Activated CD4-positive, alpha-beta memory T cell treated with anti-CD3 and anti-CD28 coated beads for 36 hours (primary cell): ENCODE measurements at regions of chr17 and their contacts with region 1.

Region 1: DNA sequence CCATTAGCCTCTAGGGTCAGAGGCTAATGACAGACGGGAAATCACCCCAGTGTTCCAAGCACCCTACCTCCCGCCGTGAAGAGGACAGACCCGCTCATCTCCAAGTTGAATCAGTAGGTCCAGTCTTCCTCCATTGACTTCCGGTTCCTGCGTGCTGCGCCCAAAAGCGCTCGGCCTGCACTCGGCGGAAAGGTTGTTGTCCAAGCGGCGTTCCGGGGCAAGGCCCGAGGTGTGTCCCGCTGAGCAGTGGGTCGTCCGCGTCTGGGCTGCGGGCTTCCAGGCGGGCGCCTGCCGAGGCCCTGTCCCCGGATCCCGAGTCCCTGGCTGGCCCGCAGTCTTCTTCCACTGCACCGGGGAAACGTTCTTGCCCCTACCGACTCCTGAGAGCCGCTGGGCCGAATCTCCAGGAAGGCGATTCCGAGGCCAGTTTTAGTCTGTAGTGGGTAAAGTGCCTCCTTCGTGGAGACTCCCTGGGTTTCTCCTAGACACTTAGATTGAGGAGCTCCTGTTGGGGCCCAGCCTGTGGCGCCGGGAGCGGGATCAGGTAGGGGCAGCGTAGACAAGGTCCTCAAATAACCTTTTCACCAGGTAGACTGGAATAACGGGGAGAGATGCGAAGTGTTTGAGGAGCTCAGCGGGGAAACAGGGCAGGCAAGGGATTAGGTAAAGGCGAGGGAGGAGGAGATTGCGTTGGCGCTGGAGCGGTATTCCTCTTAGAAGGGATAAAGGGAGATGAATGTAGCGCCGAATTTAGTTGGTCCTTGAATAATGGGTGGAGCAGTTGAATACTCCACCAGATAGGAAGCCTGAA is at the start of gene TEFM:
- DNase-seq: peak; percentile 95
- H3K4me3 Mint-ChIP-seq: peak within 1 kb of the TSS; percentile 93
- H3K27ac Mint-ChIP-seq: peak within 1 kb of the TSS; percentile 81
- H3K4me1 Mint-ChIP-seq: peaks cover 45% of the 10 kb centered on the region
- H3K27me3 Mint-ChIP-seq: no peaks in the 10 kb centered on the region
- total RNA-seq, gene TEFM: 9.7 to 11.4 TPM

Region 2: GRCh38 chr17:30831663-30832437 is 74.5 kb before region 1 on chr17 and contains the start of gene ATAD5:
- CTCF ChIA-PET with region 1: no interaction called
- POLR2A ChIA-PET with region 1: no interaction called
- intact Hi-C with region 1: loop called (anchors 5 kb)
- DNase-seq: peak; percentile 94
- H3K4me3 Mint-ChIP-seq: peak within 1 kb of the TSS; percentile 99
- H3K27ac Mint-ChIP-seq: peak within 1 kb of the TSS; percentile 86
- H3K4me1 Mint-ChIP-seq: peaks cover 24% of the 10 kb centered on the region
- H3K27me3 Mint-ChIP-seq: no peaks in the 10 kb centered on the region
- total RNA-seq, gene ATAD5: 30.0 to 32.9 TPM

Region 3: GRCh38 chr17:30886187-30886586 is 20.1 kb before region 1 on chr17:
- CTCF ChIA-PET with region 1: no interaction called
- POLR2A ChIA-PET with region 1: no interaction called
- intact Hi-C with region 1: no loop called
- DNase-seq: no peak
- H3K4me3 Mint-ChIP-seq: no peak overlapping the region
- H3K27ac Mint-ChIP-seq: no peak overlapping the region
- H3K4me1 Mint-ChIP-seq: no peaks in the 10 kb centered on the region
- H3K27me3 Mint-ChIP-seq: no peaks in the 10 kb centered on the region

Region 4: GRCh38 chr17:30970831-30971567 is 64.7 kb after region 1 on chr17 and contains the start of gene RNF135:
- CTCF ChIA-PET with region 1: no interaction called
- POLR2A ChIA-PET with region 1: no interaction called
- intact Hi-C with region 1: loop called (anchors 5 kb)
- DNase-seq: peak; percentile 70
- H3K4me3 Mint-ChIP-seq: peak within 1 kb of the TSS; percentile 96
- H3K27ac Mint-ChIP-seq: peak within 1 kb of the TSS; percentile 79
- H3K4me1 Mint-ChIP-seq: peaks cover 23% of the 10 kb centered on the region
- H3K27me3 Mint-ChIP-seq: no peaks in the 10 kb centered on the region
- total RNA-seq, gene RNF135: 7.3 to 8.5 TPM

Region 5: DNA sequence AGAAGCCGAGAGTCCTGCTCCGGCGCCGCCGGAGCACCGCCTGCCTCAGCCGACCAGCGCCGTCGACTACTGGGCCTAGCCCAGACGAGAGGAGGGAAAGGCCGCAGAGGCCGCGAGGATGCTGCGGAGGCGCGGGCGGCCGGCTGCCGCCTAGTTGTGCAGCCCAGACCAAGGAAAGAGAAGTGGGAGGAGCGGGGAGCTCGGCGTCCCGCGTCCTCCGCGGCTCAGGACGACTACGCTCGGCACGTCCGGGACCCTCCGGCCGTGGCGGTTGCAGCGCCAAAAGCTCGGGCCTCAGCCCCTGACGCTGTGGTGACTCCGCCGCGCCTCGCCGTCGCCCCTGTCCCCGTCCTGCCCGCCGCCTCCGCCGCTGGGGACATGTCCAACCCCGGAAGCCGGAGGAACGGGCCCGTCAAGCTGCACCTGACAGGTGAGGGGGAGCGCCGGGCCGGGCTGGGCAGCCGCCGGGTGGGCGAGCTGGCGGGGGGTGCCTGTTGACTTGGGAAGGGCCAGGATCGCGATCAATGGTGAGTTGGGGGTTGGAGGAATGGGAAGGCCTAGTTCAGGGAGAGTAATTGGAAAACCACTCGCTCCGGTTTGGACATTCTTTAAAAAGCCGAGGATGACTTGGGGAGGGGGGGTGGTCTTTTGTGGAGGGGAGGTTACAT is 102.2 kb after region 1 on chr17:
- CTCF ChIA-PET with region 1: no interaction called
- POLR2A ChIA-PET with region 1: interaction called, 3 read pairs
- intact Hi-C with region 1: loop called (anchors 5 kb)
- DNase-seq: peak; percentile 74
- H3K4me3 Mint-ChIP-seq: peak overlapping the region; percentile 87
- H3K27ac Mint-ChIP-seq: peak overlapping the region; percentile 78
- H3K4me1 Mint-ChIP-seq: peaks cover 17% of the 10 kb centered on the region
- H3K27me3 Mint-ChIP-seq: no peaks in the 10 kb centered on the region

Region 6: GRCh38 chr17:31068291-31068690 is 162.0 kb after region 1 on chr17:
- CTCF ChIA-PET with region 1: no interaction called
- POLR2A ChIA-PET with region 1: no interaction called
- intact Hi-C with region 1: loop called (anchors 10 kb)
- DNase-seq: peak; percentile 79
- H3K4me3 Mint-ChIP-seq: no peak overlapping the region
- H3K27ac Mint-ChIP-seq: no peak overlapping the region
- H3K4me1 Mint-ChIP-seq: no peaks in the 10 kb centered on the region
- H3K27me3 Mint-ChIP-seq: no peaks in the 10 kb centered on the region